ENCODE measurements at regions of chr2 and their contacts with region 1.

Region 1: DNA sequence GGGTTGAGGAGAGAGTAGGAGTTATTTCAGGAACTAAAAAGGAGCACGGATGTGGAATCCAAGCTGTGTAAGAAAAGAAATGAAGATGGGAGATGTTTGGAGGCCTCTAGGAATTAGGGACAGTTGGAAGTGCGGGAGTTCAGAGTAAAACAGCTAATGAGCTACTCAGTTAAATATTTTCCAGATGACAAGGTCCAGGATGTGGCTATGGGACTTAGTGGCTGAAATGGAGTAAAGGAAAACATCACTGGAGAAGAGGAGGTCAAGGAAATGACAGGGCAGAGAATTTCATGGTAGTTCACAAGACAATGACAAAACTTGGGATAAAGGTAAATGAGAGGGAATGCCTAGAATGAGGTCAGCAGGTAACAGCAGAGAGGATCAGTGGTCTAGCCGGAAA is 13.0 kb downstream of the GPR155 start:
- DNase-seq: no peak
- H3K4me3 ChIP-seq: no peak overlapping the region
- H3K27me3 ChIP-seq: no peaks in the 10 kb centered on the region
- CTCF ChIP-seq: no peak

Region 2: DNA sequence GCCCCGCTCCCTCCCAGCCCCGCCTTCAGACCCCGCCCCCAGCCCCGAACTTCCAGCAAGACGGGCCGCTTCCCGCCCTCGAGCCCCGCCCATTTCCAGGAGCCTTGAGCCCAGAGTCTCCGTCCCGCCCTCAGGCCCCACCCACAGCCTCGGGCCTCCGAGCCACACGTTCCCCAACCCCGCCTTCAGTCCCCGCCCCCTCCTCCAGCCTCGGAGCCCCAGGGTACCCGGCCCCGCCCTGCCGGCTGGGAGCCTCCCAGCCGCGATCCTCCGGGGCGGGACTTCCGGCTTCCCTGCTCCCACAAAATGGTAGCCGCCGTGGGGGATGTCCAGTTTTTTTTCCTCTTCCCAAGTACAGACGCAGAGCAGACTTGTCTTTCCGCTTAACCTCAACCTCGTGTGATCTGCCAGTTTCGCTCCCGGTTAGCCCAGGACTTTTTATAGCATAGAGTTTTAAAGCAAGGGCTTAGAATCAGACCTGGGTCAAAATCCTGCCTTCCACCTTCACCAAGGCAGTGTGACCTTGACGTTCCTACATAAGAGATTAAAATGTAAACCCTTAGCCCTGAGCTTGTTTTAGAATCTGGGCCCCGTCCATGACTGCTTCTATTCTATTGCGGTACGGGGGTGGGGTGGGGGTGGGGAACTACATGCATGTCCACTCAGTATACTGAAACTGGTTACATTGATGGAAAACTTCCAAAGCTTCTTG is 13.5 kb after region 1 on chr2:
- CTCF ChIA-PET with region 1: no interaction called
- POLR2A ChIA-PET with region 1: no interaction called
- DNase-seq: peak; percentile 85
- H3K4me3 ChIP-seq: peak overlapping the region; percentile 79
- H3K27me3 ChIP-seq: no peaks in the 10 kb centered on the region
- CTCF ChIP-seq: no peak

Region 3: GRCh38 chr2:174522553-174522952 is 48.8 kb after region 1 on chr2:
- CTCF ChIA-PET with region 1: interaction called, 3 read pairs
- POLR2A ChIA-PET with region 1: interaction called, 14 read pairs
- DNase-seq: no peak
- H3K4me3 ChIP-seq: no peak overlapping the region
- H3K27me3 ChIP-seq: peaks cover 4% of the 10 kb centered on the region; the same call in 1 of the 2 replicates
- CTCF ChIP-seq: peak; percentile 28; the same call in 1 of the 2 replicates